ENCODE measurements at regions of chr3 and their contacts with region 1.

Region 1: DNA sequence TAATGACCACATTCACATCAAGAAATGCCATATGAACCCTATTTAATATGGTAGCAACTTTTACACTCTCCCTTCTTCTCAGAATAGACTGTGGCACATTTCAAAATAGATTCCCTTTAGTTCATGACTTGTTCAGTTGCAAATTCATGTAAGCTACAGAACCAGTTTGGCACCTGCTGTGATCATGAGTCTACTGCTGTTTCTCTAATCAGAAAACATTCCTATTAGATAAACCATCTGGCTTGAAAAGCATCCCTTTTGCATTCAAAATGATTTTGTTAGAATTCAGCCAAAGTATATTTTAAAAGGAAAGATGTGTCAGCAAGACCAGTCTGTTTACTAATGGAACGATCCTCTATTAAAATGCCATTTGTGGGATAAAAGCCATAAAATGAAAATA is 304.4 kb downstream of the BCHE start:
- DNase-seq: no peak

Region 2: DNA sequence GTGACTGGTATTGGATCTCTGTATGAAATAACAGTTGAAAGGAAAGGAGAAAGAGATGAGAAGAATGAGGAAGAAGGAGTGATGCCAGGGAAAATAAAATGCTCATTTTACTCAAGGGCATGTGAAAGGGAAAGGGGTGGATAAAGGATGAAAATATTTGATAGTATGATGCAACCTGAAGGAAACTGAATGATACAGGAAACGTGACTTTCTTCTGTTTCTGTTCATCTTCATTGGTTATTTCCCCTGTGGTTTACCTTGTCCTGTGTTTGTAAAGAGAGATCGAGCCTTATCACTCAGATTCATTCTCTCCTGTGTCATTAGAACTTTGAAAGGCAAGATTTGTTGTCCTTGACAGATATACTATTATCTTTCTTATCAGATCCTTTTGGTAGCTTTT is 93.1 kb before region 1 on chr3:
- intact Hi-C with region 1: no loop called
- DNase-seq: no peak

Region 3: GRCh38 chr3:165555785-165556184 is 22.9 kb after region 1 on chr3:
- intact Hi-C with region 1: loop called (anchors 2 kb)
- DNase-seq: no peak